Aorta (tissue), 5 donors: ENCODE measurements at regions of chr12 and their contacts with region 1.

Region 1: GRCh38 chr12:54701940-54702592 is 53.9 kb upstream of the DCD start:
- DNase-seq: no peak
- ATAC-seq: no peak
- H3K4me3 ChIP-seq: no peak overlapping the region
- H3K27ac ChIP-seq: no peak overlapping the region
- H3K4me1 ChIP-seq: no peaks in the 10 kb centered on the region
- H3K27me3 ChIP-seq: no peaks in the 10 kb centered on the region

Region 2: GRCh38 chr12:54662026-54662425 is 40.0 kb before region 1 on chr12:
- intact Hi-C with region 1: no loop called
- DNase-seq: no peak
- ATAC-seq: no peak
- H3K4me3 ChIP-seq: no peak overlapping the region
- H3K27ac ChIP-seq: no peak overlapping the region
- H3K4me1 ChIP-seq: no peaks in the 10 kb centered on the region
- H3K27me3 ChIP-seq: no peaks in the 10 kb centered on the region

Region 3: GRCh38 chr12:54958048-54958658 is 256.1 kb after region 1 on chr12:
- intact Hi-C with region 1: loop called in 1 of 2 experiments (anchors 5 kb)
- DNase-seq: no peak
- ATAC-seq: no peak
- H3K4me3 ChIP-seq: no peak overlapping the region
- H3K27ac ChIP-seq: no peak overlapping the region
- H3K4me1 ChIP-seq: no peaks in the 10 kb centered on the region
- H3K27me3 ChIP-seq: no peaks in the 10 kb centered on the region